ENCODE measurements at regions of chr6 and their contacts with region 1.

Region 1: GRCh38 chr6:32195652-32195901 is 3.1 kb upstream of the GPSM3 start:
- DNase-seq: peak; percentile 100
- H3K4me3 ChIP-seq: peak overlapping the region; percentile 68 to 91 (median 82)
- H3K27ac ChIP-seq: peak overlapping the region; percentile 93 to 100 (median 100)
- H3K4me1 ChIP-seq: peaks cover 0 to 36% (median 32%) of the 10 kb centered on the region in 4 donors
- H3K27me3 ChIP-seq: no peaks in the 10 kb centered on the region
- CTCF ChIP-seq: peak in 3 of 4 experiments; percentile 15 to 42 (median 26)
- EP300 ChIP-seq: no peak
- POLR2A ChIP-seq: no peak

Region 2: DNA sequence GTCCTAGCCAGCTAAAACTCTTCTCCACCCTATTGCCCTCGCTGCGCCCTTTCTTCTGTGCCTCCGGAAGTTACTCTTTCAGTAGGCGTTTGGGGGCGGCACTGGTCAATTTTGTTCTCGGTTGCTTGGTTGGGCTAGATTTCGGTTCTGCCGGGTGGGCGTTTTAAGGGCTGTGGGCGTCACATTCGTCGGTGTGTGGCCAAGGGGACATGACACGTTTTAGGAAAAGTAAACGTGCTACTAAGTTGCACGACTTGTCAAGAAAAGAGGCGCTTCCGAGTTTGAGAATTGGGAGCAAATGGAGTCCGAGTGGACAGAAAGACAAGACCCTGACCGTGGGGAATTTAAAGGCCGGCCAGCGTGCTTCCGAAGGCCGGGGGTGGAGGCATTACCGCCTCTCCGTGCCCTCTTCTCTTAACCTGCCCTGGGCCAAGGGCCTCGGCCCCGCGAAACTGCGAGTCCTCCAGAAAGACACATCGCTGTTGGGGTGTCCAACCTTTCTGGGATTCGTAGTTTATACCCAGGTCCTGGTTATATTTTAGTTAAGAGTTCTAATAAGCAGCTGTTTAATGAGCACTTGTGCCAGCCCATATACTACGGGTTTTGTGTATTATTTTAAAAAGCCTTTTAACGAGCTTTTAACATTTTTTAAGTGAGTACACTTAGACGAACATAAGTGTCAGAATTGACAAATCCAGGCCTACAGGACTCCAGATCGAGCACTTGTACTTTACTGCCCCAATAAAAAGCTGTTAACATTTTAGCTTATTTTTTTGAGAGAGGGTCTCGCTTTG is 542.5 kb before region 1 on chr6:
- intact Hi-C with region 1: loop called (anchors 5 kb)
- DNase-seq: peak; percentile 95
- H3K4me3 ChIP-seq: peak overlapping the region; percentile 67 to 83 (median 78)
- H3K27ac ChIP-seq: peak overlapping the region; percentile 96 to 99 (median 98)
- H3K4me1 ChIP-seq: peaks cover 0 to 34% (median 26%) of the 10 kb centered on the region in 4 donors
- H3K27me3 ChIP-seq: no peaks in the 10 kb centered on the region
- CTCF ChIP-seq: no peak
- EP300 ChIP-seq: no peak
- POLR2A ChIP-seq: peak; percentile 71 to 75

Region 3: GRCh38 chr6:32127717-32128592 is 67.6 kb before region 1 on chr6 and contains the start of gene ATF6B:
- intact Hi-C with region 1: loop called (anchors 1 kb)
- DNase-seq: peak; percentile 100
- H3K4me3 ChIP-seq: peak within 1 kb of the TSS; percentile 77 to 92 (median 83)
- H3K27ac ChIP-seq: peak within 1 kb of the TSS; percentile 91 to 94 (median 92)
- H3K4me1 ChIP-seq: peaks cover 0 to 36% (median 31%) of the 10 kb centered on the region in 4 donors
- H3K27me3 ChIP-seq: no peaks in the 10 kb centered on the region
- CTCF ChIP-seq: no peak
- EP300 ChIP-seq: no peak
- POLR2A ChIP-seq: peak; percentile 68 to 76
- total RNA-seq, gene ATF6B: 24.5 to 73.4 (median 24.8) TPM

Region 4: GRCh38 chr6:32244946-32245398 is 49.4 kb after region 1 on chr6:
- intact Hi-C with region 1: loop called (anchors 2 kb)
- DNase-seq: peak; percentile 91
- H3K4me3 ChIP-seq: peak overlapping the region in 2 of 4 donors; percentile 16 to 18
- H3K27ac ChIP-seq: peak overlapping the region; percentile 37 to 67 (median 63)
- H3K4me1 ChIP-seq: peaks cover 0 to 13% (median 10%) of the 10 kb centered on the region in 4 donors
- H3K27me3 ChIP-seq: no peaks in the 10 kb centered on the region
- CTCF ChIP-seq: peak; percentile 84 to 93 (median 93)
- EP300 ChIP-seq: no peak
- POLR2A ChIP-seq: no peak

Region 5: DNA sequence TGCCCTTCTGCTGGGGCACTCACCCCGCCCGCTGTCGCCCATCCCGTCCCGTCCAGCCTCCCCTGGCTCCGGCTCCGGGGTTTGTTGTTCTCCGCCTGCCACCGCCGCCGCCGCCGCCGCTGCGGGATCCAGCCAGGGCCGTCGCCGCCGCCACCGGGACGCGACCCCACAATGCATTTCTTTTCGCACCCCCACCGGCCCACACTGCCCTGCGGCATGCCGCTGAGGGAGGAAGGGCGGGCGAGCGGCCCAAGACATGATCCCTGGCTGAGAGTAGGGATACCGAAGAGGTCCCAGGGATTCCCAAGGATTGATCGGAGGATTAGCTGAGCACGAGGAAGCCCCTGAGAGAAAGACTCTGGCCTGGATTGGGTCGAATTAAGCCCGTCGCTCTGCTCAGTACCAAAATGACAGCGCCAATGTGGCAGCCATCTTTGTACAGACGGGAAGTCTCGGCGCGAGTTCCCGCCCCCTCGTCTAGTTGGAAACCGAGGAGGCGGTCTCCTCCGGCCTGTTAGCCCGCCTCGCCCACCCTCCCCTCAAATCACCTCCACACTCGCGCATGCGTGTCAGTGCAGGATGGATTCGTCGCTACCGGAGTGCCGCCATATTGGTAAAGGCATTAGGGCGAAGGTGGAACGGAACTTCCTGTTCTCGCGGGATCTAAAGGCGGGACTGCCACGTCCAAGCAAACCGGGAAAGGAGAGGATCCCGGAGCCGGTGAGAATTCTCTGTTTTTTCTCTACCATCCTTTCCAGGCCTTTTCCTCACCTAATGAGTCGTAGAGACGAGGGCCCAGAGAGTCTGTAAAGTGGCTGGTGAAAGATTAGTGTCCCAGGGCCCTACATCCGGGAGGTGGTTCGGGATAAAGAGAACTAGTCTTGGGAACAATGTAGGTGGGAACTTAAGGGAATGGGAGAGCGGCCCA is 1004.9 kb after region 1 on chr6 and contains the starts of genes RXRB and SLC39A7:
- intact Hi-C with region 1: loop called (anchors 10 kb)
- DNase-seq: peak; percentile 100
- H3K4me3 ChIP-seq: peak within 1 kb of the TSS; percentile 77 to 90 (median 84)
- H3K27ac ChIP-seq: peak within 1 kb of the TSS; percentile 91 to 98 (median 96)
- H3K4me1 ChIP-seq: peaks cover 0 to 68% (median 52%) of the 10 kb centered on the region in 4 donors
- H3K27me3 ChIP-seq: no peaks in the 10 kb centered on the region
- CTCF ChIP-seq: no peak
- EP300 ChIP-seq: peak in 1 of 4 donors; percentile 16
- POLR2A ChIP-seq: peak; percentile 30 to 39
- total RNA-seq, gene RXRB: 27.8 to 32.4 (median 30.4) TPM
- total RNA-seq, gene SLC39A7: 48.7 to 52.1 (median 49.8) TPM

Measured in sigmoid colon (tissue), 7 donors.